PC-9 (cell line): ENCODE measurements at regions of chr1 and their contacts with region 1.

Region 1: DNA sequence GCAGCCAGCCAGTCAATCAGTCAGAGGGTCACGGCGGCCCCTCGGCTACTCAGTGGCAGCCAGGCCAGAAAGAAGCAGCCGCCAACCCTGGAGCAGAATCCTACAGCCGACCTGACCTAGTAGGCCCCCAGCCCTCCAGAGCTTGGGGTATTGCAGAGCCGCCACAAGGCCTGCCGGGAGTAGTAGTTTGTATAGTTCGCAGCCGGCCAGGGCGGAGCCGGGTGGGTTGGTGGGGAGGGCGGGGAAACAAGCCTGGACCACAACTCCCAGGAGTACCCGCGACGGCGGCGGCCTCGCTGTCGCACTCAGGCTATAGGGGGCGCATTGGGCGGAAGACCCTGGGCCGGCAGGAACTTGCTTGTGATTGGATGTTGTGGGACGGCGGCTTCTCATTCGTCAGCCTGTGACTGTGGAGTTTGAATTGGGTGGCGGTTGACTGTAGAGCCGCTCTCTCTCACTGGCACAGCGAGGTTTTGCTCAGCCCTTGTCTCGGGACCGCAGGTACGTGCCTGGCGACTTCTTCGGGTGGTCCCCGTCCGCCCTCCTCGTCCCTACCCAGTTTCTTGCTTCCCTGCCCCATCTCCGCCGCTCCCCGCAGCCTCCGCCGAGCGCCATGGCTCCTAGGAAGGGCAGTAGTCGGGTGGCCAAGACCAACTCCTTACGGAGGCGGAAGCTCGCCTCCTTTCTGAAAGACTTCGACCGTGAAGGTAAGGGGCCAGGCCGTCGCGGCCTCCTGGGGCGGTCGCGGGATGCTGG is at the start of gene CDCA8:
- DNase-seq: peak; percentile 94 to 99
- H3K4me3 ChIP-seq: peak within 1 kb of the TSS; percentile 89
- H3K27ac ChIP-seq: no peak within 1 kb of the TSS
- H3K4me1 ChIP-seq: peaks cover 21% of the 10 kb centered on the region
- H3K27me3 ChIP-seq: no peaks in the 10 kb centered on the region
- CTCF ChIP-seq: peak; percentile 73
- total RNA-seq, gene CDCA8: 42.8 and 57.9 TPM in 2 replicates

Region 2: DNA sequence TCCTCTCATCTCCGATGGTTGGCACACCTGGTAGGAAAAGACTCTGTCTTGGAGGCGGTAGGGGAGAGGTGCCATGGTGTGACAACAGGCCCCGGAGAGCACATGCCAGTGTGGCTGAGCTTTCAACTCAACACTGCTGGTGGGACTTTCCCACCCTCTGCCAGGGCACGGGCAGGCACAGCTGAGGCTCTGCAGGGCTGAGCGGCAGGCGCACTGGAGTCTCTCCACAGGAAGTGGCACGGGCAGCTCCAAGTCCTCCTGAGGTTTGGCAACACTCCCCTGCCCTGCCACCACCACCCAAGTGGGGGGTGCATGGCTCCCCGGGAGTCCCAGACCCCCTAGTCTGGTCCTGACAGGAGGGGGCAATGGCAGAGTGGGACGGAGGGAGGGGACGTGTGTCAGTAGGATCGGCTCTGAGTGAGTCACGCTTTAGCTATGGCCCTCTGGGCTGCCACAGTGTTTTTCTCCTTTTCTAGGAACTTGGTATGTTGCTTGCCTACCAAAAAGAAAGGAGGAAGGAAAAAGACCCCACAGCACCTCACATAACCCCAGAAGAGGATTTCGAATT is 1341.5 kb before region 1 on chr1:
- CTCF ChIA-PET with region 1: no interaction called
- POLR2A ChIA-PET with region 1: no interaction called
- intact Hi-C with region 1: loop called (anchors 10 kb)
- DNase-seq: peak; percentile 89 to 91
- H3K4me3 ChIP-seq: peak overlapping the region; percentile 41; the same call in 1 of the 2 replicates
- H3K27ac ChIP-seq: peak overlapping the region; percentile 97
- H3K4me1 ChIP-seq: peaks cover 67% of the 10 kb centered on the region
- H3K27me3 ChIP-seq: no peaks in the 10 kb centered on the region
- CTCF ChIP-seq: no peak

Region 3: GRCh38 chr1:37479255-37480124 is 212.8 kb before region 1 on chr1:
- CTCF ChIA-PET with region 1: no interaction called
- POLR2A ChIA-PET with region 1: no interaction called
- intact Hi-C with region 1: loop called (anchors 1 kb)
- DNase-seq: peak; percentile 93 to 98
- H3K4me3 ChIP-seq: peak overlapping the region; percentile 94
- H3K27ac ChIP-seq: peak overlapping the region; percentile 96
- H3K4me1 ChIP-seq: peaks cover 56% of the 10 kb centered on the region
- H3K27me3 ChIP-seq: no peaks in the 10 kb centered on the region
- CTCF ChIP-seq: no peak

Region 4: GRCh38 chr1:37667023-37667761 is 25.1 kb before region 1 on chr1:
- CTCF ChIA-PET with region 1: no interaction called
- POLR2A ChIA-PET with region 1: interaction called, 10 read pairs
- intact Hi-C with region 1: no loop called
- DNase-seq: no peak
- H3K4me3 ChIP-seq: no peak overlapping the region
- H3K27ac ChIP-seq: no peak overlapping the region
- H3K4me1 ChIP-seq: no peaks in the 10 kb centered on the region
- H3K27me3 ChIP-seq: peaks cover 69% of the 10 kb centered on the region
- CTCF ChIP-seq: no peak

Region 5: GRCh38 chr1:37807555-37808368 is 115.5 kb after region 1 on chr1 and contains the starts of genes C1orf122 and YRDC:
- CTCF ChIA-PET with region 1: no interaction called
- POLR2A ChIA-PET with region 1: interaction called, 8 read pairs
- intact Hi-C with region 1: loop called (anchors 1 kb)
- DNase-seq: peak; percentile 86 to 95
- H3K4me3 ChIP-seq: peak within 1 kb of the TSS; percentile 71
- H3K27ac ChIP-seq: peak within 1 kb of the TSS; percentile 63
- H3K4me1 ChIP-seq: peaks cover 20% of the 10 kb centered on the region
- H3K27me3 ChIP-seq: no peaks in the 10 kb centered on the region
- CTCF ChIP-seq: no peak
- total RNA-seq, gene C1orf122: 51.8 and 75.8 TPM in 2 replicates
- total RNA-seq, gene YRDC: 13.2 and 16.0 TPM in 2 replicates

Region 6: GRCh38 chr1:37875834-37876233 is 183.6 kb after region 1 on chr1:
- CTCF ChIA-PET with region 1: interaction called, 11 read pairs
- POLR2A ChIA-PET with region 1: no interaction called
- intact Hi-C with region 1: no loop called
- DNase-seq: peak in 1 of 2 experiments; percentile 48
- H3K4me3 ChIP-seq: no peak overlapping the region
- H3K27ac ChIP-seq: no peak overlapping the region
- H3K4me1 ChIP-seq: no peaks in the 10 kb centered on the region
- H3K27me3 ChIP-seq: no peaks in the 10 kb centered on the region
- CTCF ChIP-seq: peak; percentile 56